H1 (cell line): ENCODE measurements at regions of chr18 and their contacts with region 1.

Region 1: GRCh38 chr18:25832001-25832604 is 258.3 kb downstream of the SS18 start:
- DNase-seq: peak; percentile 17 to 83
- H3K4me3 ChIP-seq: no peak overlapping the region
- H3K27ac ChIP-seq: no peak overlapping the region
- H3K4me1 ChIP-seq: peaks cover 0 to 3% (median 0%) of the 10 kb centered on the region in 4 experiments; a peak in 1 of 7 replicates
- H3K27me3 ChIP-seq: no peaks in the 10 kb centered on the region
- CTCF ChIP-seq: peak; percentile 92 to 97 (median 94)
- EP300 ChIP-seq: no peak
- POLR2A ChIP-seq: no peak
- RAD21 ChIP-seq: peak; percentile 91

Region 2: DNA sequence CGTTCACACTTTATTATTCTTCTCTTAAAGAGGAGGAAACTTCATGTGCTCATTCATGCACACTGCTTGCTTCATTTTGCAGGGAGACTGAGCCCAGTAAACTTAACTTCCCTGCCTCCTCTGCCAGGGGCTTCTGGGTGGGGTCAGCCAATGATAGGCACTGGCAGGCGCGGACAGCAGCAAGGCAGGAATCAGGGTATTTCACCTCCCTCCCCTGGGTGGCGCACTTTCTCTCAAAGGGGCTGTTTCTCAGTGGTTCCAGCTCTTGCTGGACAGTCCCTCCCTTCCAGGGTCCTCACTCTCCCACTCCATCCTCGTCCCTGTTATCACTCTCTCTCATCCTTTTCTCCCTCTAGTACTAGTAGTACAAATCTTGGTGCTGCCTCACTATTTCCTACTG is 159.6 kb before region 1 on chr18:
- CTCF ChIA-PET with region 1: interaction called, 13 read pairs
- POLR2A ChIA-PET with region 1: no interaction called
- DNase-seq: peak; percentile 33 to 90
- H3K4me3 ChIP-seq: no peak overlapping the region
- H3K27ac ChIP-seq: no peak overlapping the region
- H3K4me1 ChIP-seq: peaks cover 6 to 17% (median 12%) of the 10 kb centered on the region in 4 experiments
- H3K27me3 ChIP-seq: no peaks in the 10 kb centered on the region
- CTCF ChIP-seq: peak; percentile 75 to 93 (median 82)
- EP300 ChIP-seq: no peak
- POLR2A ChIP-seq: no peak
- RAD21 ChIP-seq: peak; percentile 71 to 79

Region 3: DNA sequence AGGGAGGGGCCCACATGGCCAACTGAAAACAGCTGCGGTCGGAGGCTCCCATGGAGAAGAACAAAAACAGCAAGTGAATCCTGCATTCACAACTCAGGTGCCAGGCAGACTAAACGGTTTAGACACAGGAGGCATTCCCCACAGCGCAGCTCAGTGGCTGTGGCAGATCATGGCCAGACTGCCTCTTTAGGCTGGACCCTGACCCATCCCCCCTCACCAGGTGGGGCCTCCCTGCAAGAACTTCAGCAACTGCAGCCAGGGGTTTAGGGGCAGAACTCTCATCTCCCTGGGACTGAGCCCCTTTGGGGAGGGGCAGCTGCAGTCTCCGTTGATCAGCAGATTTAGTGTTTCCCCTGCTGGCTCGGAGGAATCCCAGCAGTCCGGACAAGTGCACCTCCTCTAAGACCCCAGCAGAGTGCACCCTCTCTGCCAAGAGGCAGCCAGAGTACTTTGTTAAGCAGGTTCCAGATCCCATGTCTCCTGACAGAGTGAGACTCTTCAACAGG is 88.4 kb before region 1 on chr18:
- CTCF ChIA-PET with region 1: interaction called, 25 read pairs
- POLR2A ChIA-PET with region 1: no interaction called
- DNase-seq: peak; percentile 56 to 73
- H3K4me3 ChIP-seq: peak overlapping the region in 1 of 4 experiments; percentile 16; a peak in 1 of 8 replicates
- H3K27ac ChIP-seq: no peak overlapping the region
- H3K4me1 ChIP-seq: peaks cover 0 to 6% (median 2%) of the 10 kb centered on the region in 4 experiments; a peak in 4 of 7 replicates
- H3K27me3 ChIP-seq: no peaks in the 10 kb centered on the region
- CTCF ChIP-seq: peak; percentile 64 to 98 (median 81)
- EP300 ChIP-seq: peak in 1 of 2 experiments; percentile 76; a peak in 1 of 3 replicates
- POLR2A ChIP-seq: no peak
- RAD21 ChIP-seq: peak; percentile 56 to 72

Region 4: DNA sequence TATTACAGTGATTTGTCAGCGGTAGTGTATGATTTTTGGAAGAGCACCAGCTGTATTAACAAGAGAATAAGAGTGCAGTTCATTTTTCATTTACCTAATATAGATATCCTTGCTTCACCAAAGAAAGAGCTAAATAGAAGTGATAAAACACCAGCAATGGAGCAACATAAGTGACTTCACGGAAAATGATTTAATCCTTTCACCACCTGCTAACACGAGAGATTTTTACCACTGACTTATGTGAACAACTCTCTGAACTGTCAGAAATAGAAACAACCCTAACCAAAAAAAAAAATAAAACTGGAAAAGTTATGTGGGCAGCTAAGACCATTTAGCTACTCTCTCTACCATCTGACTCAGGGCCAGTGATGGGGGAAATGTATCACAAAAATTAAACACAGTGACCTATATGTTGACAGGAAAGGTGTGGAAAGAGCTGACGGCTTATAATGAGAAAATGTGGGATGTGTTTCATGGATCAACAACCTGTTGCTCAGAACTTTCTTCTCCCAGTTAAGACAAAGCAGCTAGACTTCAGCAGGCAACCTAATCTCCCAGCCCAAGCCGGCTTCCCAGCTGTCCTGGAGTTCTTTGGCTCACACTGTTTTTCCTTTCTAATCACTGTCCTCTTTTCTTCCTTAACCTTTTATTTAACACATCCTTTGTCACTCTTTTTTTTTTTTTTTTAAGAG is 14.4 kb before region 1 on chr18:
- CTCF ChIA-PET with region 1: interaction called, 17 read pairs
- POLR2A ChIA-PET with region 1: no interaction called
- DNase-seq: no peak
- H3K4me3 ChIP-seq: no peak overlapping the region
- H3K27ac ChIP-seq: no peak overlapping the region
- H3K4me1 ChIP-seq: no peaks in the 10 kb centered on the region
- H3K27me3 ChIP-seq: no peaks in the 10 kb centered on the region; a peak in 1 of 7 replicates
- CTCF ChIP-seq: no peak
- EP300 ChIP-seq: no peak
- POLR2A ChIP-seq: no peak
- RAD21 ChIP-seq: no peak

Region 5: DNA sequence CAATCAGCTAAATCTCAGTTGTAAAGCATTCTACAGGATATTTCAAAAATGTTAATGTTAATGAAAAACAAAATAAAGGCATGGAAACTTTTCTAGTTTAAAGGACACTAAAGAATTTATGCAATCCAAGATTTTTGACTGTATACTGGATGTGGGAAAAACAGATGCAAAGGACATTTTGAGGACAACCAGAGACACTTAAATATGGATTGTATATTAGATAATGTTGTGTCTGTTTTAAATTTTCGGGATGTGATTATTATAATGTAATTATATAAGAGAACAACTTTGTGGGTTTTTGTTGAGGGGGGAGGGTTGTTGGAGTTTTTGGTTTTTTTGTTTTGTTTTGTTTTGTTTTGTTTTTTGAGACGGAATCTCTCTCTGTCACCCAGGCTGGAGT is 332.5 kb after region 1 on chr18:
- CTCF ChIA-PET with region 1: no interaction called
- POLR2A ChIA-PET with region 1: no interaction called
- DNase-seq: no peak
- H3K4me3 ChIP-seq: no peak overlapping the region
- H3K27ac ChIP-seq: no peak overlapping the region
- H3K4me1 ChIP-seq: no peaks in the 10 kb centered on the region
- H3K27me3 ChIP-seq: no peaks in the 10 kb centered on the region
- CTCF ChIP-seq: no peak
- EP300 ChIP-seq: no peak
- POLR2A ChIP-seq: no peak
- RAD21 ChIP-seq: no peak